Left ventricle myocardium inferior (tissue), 1 donor: ENCODE measurements at regions of chrX and their contacts with region 1.

Region 1: GRCh38 chrX:119067023-119067739 is 5.6 kb upstream of the CT47C1 start:
- DNase-seq: peak; percentile 43
- H3K4me3 ChIP-seq: no peak overlapping the region
- H3K27ac ChIP-seq: no peak overlapping the region
- H3K4me1 ChIP-seq: peaks cover 5% of the 10 kb centered on the region
- H3K27me3 ChIP-seq: no peaks in the 10 kb centered on the region
- CTCF ChIP-seq: peak; percentile 70

Region 2: DNA sequence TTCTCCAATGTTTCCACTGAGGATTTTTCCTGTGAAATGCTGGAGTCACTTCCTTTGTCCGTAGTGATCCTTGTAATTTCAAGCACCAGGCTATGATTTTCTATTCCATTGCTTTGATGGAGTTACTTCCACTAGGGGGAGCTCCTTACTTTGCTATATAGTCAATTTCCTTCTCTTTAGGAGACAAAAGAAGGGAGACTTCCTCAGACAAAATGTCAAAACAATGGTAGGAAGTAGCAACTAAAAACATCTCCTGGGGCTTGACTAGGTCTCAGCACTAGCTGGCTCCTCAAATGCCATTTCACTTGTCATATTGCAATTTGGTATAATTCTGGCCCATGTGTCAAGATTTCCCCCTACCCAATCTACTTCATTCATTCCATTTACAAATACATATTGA is 219.5 kb before region 1 on chrX:
- intact Hi-C with region 1: loop called (anchors 5 kb)
- DNase-seq: no peak
- H3K4me3 ChIP-seq: no peak overlapping the region
- H3K27ac ChIP-seq: no peak overlapping the region
- H3K4me1 ChIP-seq: no peaks in the 10 kb centered on the region
- H3K27me3 ChIP-seq: no peaks in the 10 kb centered on the region
- CTCF ChIP-seq: peak; percentile 68

Region 3: GRCh38 chrX:119015407-119016237 is 51.6 kb before region 1 on chrX:
- intact Hi-C with region 1: no loop called
- DNase-seq: peak; percentile 49
- H3K4me3 ChIP-seq: no peak overlapping the region
- H3K27ac ChIP-seq: no peak overlapping the region
- H3K4me1 ChIP-seq: peaks cover 5% of the 10 kb centered on the region
- H3K27me3 ChIP-seq: no peaks in the 10 kb centered on the region
- CTCF ChIP-seq: no peak